ENCODE measurements at regions of chr20 and their contacts with region 1.

Region 1: DNA sequence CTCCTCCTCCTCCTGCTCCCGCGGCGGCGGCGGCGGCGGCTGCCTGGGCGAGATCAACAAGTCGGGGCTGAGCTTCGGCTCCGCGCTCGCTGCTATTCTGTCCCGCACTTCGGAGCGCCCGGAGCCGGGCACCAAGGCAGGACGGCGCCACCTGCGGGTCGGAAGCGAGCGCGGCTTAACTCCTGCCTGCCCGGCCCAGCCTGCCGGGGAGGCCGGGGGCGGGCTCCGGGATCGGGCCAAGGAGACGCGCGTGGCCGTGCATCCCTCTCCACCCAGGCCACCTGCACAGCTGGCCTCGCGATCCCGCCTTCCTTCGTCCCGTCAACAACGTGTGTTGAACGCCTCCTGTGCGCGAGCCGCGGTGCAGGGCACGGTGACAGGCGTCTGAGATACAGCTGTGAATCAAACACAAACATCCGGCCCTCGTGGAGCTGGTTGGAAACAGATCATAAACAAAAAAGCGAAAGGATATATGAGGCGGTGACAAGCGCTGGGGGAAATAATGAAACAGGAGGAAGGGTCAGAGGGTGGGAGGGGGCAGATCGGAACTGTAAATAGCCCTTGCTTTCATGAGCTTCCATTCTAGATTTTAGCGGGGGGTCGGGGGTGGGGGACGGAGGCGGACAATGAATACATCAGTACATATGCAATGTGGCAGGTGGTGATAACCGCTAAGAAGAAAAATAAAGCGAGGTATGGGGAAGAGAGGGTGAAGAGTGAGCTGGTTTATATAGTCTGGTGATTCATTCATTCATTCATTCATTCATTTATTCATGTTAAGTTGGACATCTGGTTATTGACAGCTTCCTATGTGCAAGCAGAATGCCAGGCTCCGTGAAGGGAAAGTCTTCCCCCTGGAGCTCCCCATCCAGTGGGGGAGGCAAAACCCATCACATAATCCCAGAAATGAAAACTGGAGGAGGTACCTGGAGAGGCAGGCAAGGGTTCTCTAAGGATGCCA is 2.0 kb upstream of the KCNB1 start:
- DNase-seq: peak; percentile 92
- H3K27ac ChIP-seq: no peak overlapping the region
- CTCF ChIP-seq: peak; percentile 98

Region 2: DNA sequence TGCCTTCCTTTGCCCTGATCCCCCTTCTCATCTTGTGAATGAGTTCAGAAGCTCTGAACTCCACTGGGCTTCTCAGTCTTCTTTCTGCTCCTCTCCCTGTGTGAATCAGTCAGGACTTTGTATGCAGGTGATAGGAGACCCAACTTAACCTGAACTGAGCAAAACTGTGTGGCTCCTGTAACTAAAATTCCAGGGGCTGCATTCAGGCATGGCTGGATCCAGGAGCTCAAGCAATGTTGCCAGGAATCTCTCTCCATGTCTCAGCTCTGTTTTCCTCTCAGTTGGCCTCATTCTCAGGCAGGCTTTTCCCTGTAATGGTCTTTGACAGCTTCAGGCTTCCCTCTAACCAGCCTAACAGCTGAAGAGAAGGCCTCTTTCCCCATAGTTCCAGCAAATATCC is 155.7 kb before region 1 on chr20:
- CTCF ChIA-PET with region 1: interaction called, 120 read pairs
- POLR2A ChIA-PET with region 1: interaction called, 4 read pairs
- DNase-seq: no peak
- H3K27ac ChIP-seq: no peak overlapping the region
- CTCF ChIP-seq: no peak

Region 3: DNA sequence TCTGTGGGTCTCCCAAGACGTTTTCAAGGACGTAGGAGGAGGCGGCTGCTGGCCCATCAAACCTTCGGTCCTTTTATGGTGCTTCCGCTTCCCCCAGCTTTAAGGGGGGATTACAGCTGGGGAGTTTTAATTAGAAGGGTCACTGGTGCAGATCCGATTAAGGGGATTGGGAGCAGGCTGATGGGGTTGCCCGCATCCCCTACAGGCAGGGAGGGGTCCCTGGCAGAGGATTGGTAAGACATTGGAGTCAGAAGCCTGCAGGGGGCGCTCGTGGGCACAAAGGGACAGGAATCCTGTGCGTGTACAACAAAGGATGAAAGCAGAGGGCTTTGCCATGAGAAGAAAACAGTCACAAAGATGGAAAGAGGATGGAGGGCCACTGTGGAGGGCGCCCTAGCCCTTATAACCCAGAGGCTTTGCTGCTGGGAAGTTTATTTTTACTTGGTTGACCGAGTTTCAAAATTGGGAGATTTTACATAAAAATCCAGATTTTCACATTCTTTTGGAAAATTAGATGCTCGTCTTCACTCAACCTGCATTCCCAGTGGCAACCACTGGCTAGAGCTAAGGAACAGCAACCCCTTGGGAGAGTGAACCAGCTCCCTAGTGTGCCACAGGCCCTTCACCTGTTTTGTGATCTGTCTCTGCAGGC is 99.9 kb before region 1 on chr20:
- CTCF ChIA-PET with region 1: interaction called, 15 read pairs
- POLR2A ChIA-PET with region 1: no interaction called
- DNase-seq: no peak
- H3K27ac ChIP-seq: no peak overlapping the region; the same call in 1 of the 2 replicates
- CTCF ChIP-seq: no peak; the same call in 1 of the 2 replicates

Region 4: GRCh38 chr20:49508435-49509199 is 24.2 kb after region 1 on chr20:
- CTCF ChIA-PET with region 1: interaction called, 58 read pairs
- POLR2A ChIA-PET with region 1: no interaction called
- DNase-seq: peak; percentile 63
- H3K27ac ChIP-seq: peak overlapping the region; percentile 66
- CTCF ChIP-seq: no peak; the same call in 1 of the 2 replicates

Region 5: DNA sequence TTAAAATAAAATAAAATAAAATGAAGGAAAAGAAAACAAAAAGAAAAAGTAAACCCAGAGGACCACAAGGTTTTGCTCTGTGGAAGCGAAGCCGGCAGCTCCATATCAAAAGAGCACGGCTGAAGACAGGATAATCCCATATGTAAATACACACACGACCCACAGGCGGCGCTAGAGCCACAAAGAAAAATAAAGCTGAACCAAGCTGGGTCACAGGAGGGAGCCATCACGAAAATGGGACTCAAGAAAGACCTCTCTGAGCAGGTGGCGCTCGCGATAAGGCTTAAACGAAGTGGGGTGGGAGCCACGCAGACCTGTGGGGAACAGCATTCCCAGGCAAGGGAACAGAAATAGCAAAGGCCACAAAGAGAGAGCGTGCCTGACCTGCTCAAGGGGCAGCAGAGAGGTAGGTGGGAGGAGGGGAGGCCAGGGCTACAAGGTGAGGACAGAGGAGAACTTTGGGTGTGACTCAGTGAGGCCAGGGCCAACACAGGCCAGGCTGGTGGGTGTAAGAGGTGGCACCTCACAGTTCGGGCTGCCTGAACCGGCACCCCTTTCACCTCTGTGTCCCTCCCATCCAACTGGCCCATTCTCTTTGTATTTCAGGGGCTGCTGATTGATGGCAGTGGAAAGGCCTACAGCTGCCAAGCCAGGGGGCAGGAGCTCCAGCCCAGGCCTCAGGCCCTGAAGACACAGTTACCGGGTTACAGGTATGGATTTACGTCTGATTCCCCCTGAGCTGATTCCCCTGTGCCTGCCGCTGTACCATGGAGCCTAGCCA is 57.5 kb after region 1 on chr20:
- CTCF ChIA-PET with region 1: interaction called, 16 read pairs
- POLR2A ChIA-PET with region 1: no interaction called
- DNase-seq: peak; percentile 88
- H3K27ac ChIP-seq: no peak overlapping the region
- CTCF ChIP-seq: peak; percentile 96

Region 6: DNA sequence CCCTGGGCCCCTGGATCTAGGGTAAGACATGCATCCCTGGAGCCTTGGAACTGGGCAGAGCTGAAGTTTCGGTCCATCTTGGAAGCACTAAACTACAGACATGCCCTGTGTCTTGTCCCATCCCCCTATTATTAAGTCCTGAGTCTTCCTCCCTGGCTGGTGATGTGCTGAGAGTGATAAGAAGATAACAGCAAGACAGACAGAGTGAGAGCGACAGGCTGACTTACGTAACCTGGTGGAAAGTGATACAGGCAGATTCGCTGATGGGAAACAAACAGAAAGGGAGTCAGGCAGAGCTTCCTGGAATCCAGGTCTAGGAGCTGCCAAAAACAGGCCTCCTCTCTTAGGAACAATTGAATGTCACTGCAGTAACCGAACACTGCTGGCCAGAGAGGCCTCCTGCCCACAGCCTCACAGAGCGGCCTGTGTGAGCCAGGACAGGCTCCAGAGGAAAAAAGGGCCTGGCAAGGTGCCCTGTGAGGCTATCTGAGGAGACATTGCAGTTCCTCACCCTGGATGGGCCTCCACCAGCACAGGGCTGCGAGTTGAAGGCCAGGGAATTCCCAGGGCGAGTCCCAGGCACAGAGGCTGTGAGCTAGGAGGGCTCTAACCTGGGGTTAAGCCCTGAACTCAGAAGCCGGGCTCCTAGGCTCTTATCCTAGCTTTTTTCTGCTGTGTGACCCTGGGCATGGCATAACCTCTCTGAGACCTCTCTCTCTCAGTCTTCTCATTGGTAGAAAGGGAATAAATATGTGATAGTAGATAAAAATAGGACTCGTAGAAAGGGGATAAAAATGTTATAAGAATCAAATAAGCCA is 263.5 kb after region 1 on chr20:
- CTCF ChIA-PET with region 1: no interaction called
- POLR2A ChIA-PET with region 1: no interaction called
- DNase-seq: no peak
- H3K27ac ChIP-seq: no peak overlapping the region
- CTCF ChIP-seq: no peak

Measured in RWPE1 (cell line).